HepG2 (cell line): ENCODE measurements at regions of chr1 and their contacts with region 1.

Region 1: DNA sequence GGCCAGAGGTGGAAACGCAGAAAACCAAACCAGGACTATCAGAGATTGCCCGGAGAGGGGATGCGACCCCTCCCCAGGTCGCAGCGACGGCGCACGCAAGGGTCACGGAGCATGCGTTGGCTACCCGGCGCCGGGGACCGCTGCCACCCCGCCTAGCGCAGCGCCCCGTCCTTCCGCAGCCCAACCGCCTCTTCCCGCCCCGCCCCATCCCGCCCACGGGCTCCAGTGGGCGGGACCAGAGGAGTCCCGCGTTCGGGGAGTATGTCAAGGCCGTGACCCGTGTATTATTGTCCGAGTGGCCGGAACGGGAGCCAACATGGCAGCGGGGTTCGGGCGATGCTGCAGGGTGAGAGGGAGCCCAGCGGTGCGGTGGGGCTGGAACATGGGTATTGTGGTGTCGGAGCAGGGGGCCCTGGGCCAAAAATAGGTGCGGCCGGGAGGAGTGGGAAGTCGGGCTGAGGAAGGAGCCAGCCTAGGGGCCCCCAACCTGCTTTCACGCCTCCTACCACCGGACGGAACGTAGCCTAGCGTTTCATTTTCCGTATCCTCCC is at the start of gene ACADM:
- DNase-seq: peak; percentile 88
- ATAC-seq: peak; percentile 94
- H3K4me3 ChIP-seq: peak within 1 kb of the TSS; percentile 86 to 98 (median 95)
- H3K27ac ChIP-seq: peak within 1 kb of the TSS; percentile 91
- H3K4me1 ChIP-seq: peaks cover 42% of the 10 kb centered on the region
- H3K27me3 ChIP-seq: no peaks in the 10 kb centered on the region
- CTCF ChIP-seq: 0 out of 2 replicates have a peak, but pooled peaks have one; percentile 13
- EP300 ChIP-seq: no peak; a peak in 2 of 4 replicates
- POLR2A ChIP-seq: peak; percentile 79 to 96
- RAD21 ChIP-seq: no peak
- total RNA-seq, gene ACADM: 92.2 and 133 TPM in 2 replicates

Region 2: GRCh38 chr1:75615613-75616435 is 108.7 kb before region 1 on chr1:
- CTCF ChIA-PET with region 1: no interaction called
- POLR2A ChIA-PET with region 1: interaction called, 5 read pairs
- in situ Hi-C with region 1: no loop called
- intact Hi-C with region 1: loop called (anchors 2 kb)
- DNase-seq: no peak
- ATAC-seq: peak; percentile 82
- H3K4me3 ChIP-seq: peak overlapping the region; percentile 69 to 81 (median 78)
- H3K27ac ChIP-seq: no peak overlapping the region
- H3K4me1 ChIP-seq: peaks cover 13% of the 10 kb centered on the region
- H3K27me3 ChIP-seq: peaks cover 0 to 2% of the 10 kb centered on the region in 2 experiments; a peak in 1 of 5 replicates
- CTCF ChIP-seq: no peak
- EP300 ChIP-seq: no peak
- POLR2A ChIP-seq: no peak
- RAD21 ChIP-seq: no peak